ENCODE measurements at regions of chr11 and their contacts with region 1.

Region 1: DNA sequence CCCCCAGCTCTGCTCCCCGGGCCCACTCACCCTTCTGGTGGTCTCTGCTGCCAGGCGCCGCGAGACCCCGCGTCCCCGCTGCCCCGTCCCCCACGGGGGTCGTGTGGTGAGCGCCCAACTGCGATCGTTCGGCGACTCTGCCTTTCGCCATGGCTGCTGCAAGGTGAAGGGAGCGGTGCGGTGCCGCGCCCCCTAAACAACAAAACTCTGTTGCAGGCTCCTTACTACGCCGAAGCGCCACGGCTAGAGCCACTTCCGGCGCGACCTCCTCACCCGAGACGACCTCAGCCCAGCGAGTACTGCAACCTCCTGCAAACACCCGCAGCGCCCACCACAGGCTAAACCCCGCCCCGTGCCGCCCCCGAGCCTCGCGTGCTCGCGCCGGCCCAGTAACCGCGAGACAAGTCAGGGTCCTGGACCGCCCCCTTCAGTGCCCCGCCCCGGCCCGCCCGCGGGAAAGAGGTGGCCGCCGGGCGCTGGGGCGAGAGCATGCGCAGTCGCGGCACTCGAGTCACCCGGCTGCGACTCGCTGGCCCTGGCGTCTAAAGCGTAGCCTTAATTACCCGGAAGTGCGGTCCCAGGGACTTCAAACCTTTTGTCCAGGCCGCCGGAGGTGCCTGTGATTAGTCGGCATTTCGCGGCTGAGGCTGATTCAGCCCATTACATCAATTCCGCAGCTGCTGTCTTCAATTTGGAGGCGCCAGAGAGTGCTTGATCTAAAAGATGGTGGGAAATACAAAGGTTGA is at the start of gene TMEM41B:
- DNase-seq: peak; percentile 99 to 100 (median 100)
- ATAC-seq: peak; percentile 100
- H3K4me3 ChIP-seq: peak within 1 kb of the TSS; percentile 97
- H3K27ac ChIP-seq: peak within 1 kb of the TSS; percentile 88
- H3K4me1 ChIP-seq: peaks cover 3% of the 10 kb centered on the region
- H3K27me3 ChIP-seq: no peaks in the 10 kb centered on the region
- total RNA-seq, gene TMEM41B: 20.4 to 25.3 (median 22.8) TPM

Region 2: DNA sequence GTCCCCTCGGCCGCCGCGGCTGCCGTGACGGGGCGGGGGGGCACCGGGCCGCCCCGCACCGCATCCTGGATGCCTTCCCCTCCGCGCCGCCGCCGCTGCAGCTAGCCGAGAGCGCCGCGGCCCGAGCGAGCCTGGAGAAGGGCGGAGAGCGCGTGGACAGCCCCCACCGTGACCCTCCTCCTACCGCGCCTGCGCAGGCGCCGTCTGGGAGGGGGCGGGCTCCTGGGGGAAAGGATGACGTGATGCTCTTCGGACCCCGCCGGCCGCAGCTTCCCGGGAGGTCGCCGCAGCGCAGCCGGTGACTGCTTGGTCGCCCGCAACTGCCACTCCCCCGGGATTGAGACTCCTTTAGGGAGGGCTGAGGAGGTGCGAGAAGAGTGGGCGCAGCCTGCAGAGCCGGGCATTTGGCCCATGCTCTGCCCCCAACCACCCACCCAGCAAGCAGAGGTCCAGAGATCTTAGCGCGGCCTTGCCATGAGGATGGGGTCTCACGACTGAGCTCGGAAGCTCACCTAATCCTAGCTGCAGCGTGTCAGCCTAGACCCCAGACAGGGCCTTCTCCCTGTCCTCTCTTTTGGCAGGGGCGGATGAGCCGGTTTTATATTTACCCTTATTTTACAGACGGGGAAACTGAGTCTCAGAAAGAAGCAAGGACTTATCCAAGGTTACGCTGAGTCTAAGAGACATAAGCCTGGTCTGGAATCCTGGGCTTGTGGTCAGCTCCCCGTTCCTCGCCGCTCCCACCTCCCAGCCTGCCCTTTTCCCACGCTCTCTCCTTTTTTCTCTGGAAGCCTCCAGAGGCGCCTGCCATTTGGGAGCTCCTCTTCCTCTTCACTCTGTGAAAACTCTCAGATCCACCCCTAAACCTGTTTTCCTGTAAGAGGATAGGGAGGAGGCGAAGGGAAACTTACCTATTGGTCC is 49.0 kb before region 1 on chr11 and contains the start of gene DENND5A:
- intact Hi-C with region 1: loop called in 1 of 4 experiments (anchors 10 kb)
- DNase-seq: peak; percentile 91 to 96 (median 95)
- ATAC-seq: peak; percentile 93 to 96
- H3K4me3 ChIP-seq: peak within 1 kb of the TSS; percentile 87
- H3K27ac ChIP-seq: peak within 1 kb of the TSS; percentile 90
- H3K4me1 ChIP-seq: peaks cover 2% of the 10 kb centered on the region
- H3K27me3 ChIP-seq: no peaks in the 10 kb centered on the region
- total RNA-seq, gene DENND5A: 84.9 to 121 (median 93.3) TPM

Region 3: DNA sequence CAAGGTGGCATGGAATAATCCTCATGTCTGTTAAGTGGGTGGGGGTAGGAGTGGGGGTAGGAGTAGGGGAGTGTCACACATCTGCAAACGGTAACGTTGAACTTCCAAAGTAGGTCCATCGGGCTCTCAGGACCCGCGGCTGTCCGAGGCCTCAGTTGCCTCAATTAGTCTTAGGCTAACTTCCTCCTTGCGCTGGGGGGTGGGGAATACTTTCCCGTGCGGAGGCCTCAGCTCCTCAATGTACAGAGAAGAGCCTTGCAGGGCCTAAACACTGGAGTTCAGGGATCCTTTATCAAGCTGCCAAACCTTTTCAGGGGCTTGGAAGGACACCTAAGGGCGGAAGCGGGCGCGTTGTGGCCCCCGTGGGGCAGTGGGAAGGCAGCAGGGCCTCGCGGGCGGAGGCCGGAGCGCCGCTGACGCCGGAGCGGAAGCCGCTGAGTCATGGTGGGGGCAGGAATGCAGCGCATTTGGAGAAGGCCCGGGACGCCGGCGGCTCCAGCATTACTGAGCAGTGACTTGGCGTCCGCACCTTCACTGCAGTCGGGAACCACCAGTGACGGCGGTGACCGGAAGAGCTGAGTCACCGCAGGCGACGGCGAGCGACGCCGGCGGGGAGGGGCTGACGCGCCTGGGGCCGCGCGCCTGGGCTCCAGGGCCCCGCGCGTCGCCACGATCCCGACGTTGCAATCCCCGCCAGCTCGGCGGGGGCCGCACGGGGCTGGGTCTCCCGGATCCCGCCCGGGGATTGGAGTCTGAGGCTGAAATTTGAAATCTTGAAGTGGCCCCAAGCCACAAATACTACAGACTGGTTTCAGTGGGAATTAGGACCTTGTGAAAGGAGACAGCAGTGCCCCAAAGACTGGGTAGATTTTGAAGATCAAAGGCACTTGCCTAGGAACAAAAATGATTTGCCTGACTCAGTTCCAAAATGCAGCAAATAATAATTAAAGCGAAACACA is 49.8 kb after region 1 on chr11:
- intact Hi-C with region 1: loop called in 1 of 4 experiments (anchors 10 kb)
- DNase-seq: peak; percentile 98
- ATAC-seq: peak; percentile 98 to 99
- H3K4me3 ChIP-seq: peak overlapping the region; percentile 53
- H3K27ac ChIP-seq: peak overlapping the region; percentile 99
- H3K4me1 ChIP-seq: no peaks in the 10 kb centered on the region
- H3K27me3 ChIP-seq: no peaks in the 10 kb centered on the region

Region 4: DNA sequence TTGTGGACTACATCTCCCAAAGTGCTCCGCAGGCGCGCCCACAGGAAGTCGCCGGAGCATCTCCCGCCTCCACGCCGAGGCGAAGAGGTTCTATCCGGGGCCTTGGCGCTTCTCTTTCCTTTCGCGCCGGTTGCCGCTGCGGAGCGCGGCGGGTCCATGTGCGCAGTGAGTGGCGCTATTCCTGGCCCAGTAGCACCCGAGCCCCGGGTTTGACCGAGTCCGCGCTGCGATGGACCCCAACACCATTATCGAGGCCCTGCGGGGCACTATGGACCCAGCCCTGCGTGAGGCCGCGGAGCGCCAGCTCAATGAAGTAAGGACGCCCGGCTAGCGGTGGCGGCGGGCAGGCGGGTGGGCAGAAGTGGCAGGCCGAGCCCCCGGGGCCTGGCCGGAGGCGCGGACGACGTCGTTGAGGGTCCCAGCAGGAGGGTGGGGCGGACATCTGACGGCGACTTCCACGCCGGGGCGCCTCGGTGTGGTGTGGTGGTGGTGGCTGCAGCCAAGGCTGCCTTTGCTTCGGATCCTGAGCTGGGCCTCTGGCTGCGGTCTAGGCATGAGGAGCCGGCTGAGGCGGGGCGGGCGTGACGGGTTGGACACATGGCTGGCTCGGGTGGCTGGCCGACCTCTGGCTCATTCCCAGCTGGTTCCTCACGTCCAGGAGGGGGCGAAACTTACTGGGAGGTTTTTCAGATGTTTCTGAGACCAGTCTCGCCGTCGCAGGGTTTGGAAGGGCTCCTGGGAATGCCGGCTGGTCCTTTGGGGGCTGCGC is 70.3 kb after region 1 on chr11 and contains the start of gene IPO7:
- intact Hi-C with region 1: loop called in 1 of 4 experiments (anchors 10 kb)
- DNase-seq: peak; percentile 93 to 96 (median 96)
- ATAC-seq: peak; percentile 97 to 98
- H3K4me3 ChIP-seq: peak within 1 kb of the TSS; percentile 67
- H3K27ac ChIP-seq: peak within 1 kb of the TSS; percentile 78
- H3K4me1 ChIP-seq: peaks cover under 1% of the 10 kb centered on the region
- H3K27me3 ChIP-seq: no peaks in the 10 kb centered on the region
- total RNA-seq, gene IPO7: 93.8 to 131 (median 122) TPM

Region 5: GRCh38 chr11:9479899-9480298 is 165.4 kb after region 1 on chr11:
- intact Hi-C with region 1: no loop called
- DNase-seq: no peak
- ATAC-seq: no peak
- H3K4me3 ChIP-seq: no peak overlapping the region
- H3K27ac ChIP-seq: no peak overlapping the region
- H3K4me1 ChIP-seq: no peaks in the 10 kb centered on the region
- H3K27me3 ChIP-seq: no peaks in the 10 kb centered on the region